RWPE1 (cell line): ENCODE measurements at regions of chr6 and their contacts with region 1.

Region 1: DNA sequence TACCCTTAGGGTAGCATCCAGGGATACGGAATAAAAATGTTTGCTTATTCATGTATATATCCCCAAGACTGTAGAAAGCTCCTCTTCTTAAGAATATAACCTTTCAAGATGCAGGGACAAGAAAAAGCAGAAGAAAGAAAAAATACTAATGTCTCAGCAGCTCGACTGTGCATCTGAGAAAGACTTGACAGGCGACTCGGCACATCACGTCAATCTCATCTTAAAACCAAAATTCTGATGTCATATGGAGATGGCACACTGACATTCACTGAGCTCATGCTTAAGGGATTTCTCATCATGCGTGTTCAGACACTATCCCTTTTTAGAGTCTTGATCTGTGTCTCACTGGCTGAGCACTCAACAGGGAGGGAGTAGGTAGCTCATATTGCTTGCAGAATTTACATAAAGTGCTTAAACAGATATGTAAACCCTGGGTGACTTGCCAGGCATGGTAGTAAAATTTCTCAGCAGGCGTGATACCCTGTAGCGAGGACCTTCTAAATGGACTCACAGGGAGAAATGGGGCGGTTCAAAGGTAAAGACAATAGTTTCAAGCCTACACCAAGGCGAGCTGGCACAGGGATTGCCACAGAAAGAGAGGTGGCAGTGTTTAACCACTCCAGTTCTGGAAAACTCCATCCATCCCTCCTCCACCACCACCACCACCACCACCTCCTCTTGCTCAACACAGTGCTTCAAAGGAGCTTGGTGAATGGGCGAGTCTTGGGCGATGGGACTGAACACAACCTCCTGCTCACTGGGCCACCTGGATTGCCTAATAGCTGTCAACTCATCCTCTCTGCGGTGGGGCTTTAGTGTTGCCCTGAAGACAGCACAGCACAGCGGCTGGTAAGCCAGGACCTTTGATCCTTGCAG is 330.5 kb downstream of the TFAP2A start:
- DNase-seq: peak; percentile 49
- H3K27ac ChIP-seq: peak overlapping the region; percentile 41; the same call in 1 of the 2 replicates
- CTCF ChIP-seq: no peak

Region 2: DNA sequence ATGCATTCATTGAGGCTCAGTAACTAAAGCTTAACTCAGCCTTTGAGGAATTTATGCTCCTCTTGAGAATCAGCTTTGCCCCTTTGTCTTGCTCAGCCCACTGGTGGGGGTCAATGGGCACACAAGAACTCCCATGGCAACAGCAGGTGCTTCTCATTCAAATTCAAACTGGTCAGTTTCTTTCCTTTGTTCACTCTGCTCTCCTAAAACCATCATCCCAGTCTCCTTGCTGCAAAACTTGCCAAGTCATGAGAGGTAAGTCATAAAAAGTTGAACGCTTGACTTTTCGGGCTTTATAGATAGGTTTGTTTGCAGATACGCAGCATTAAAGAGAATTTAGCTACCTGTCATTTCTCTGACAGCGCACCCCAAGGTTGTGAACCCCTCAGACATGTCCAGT is 183.8 kb after region 1 on chr6:
- CTCF ChIA-PET with region 1: no interaction called
- POLR2A ChIA-PET with region 1: no interaction called
- DNase-seq: no peak
- H3K27ac ChIP-seq: no peak overlapping the region
- CTCF ChIP-seq: no peak

Region 3: DNA sequence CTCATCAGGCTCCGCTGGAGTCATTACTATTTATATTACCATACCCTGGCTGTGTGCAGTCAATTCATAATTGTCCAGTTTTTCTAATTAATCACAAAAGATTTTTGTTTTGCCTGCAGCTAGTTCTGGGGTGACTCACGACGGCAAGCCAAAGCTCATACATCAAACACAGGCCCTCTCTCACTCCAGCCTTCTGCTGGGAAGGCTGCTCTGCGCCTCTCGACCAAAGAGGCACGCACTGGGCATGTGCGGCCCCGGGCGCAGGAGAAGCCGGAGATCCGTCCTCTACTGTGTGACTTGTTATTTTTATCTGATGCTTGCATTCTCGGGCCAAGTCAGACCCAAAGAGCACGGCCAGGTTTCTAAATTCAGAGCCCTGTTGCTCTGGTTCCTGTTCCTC is 232.0 kb after region 1 on chr6:
- CTCF ChIA-PET with region 1: interaction called, 3 read pairs
- POLR2A ChIA-PET with region 1: interaction called, 13 read pairs
- DNase-seq: peak; percentile 73
- H3K27ac ChIP-seq: peak overlapping the region; percentile 69
- CTCF ChIP-seq: no peak

Region 4: DNA sequence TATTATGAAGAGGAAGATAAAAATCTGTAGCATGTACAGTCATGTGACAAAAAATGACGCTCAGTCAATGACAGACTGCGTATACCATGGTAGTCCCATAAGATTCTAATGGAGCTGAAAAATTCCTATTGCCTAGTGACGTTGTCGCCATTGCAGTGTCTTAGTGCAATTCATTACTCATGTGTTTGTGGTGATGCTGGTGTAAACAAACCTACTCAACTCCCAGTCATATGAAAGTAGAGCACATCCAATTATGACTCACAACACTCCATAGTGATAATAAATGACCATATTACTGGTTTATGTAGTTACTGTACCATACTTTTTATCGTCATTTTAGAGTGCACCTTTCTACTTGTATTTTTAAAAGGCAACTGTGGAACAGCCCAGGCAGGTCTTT is 285.5 kb after region 1 on chr6:
- CTCF ChIA-PET with region 1: no interaction called
- POLR2A ChIA-PET with region 1: interaction called, 10 read pairs
- DNase-seq: peak; percentile 57
- H3K27ac ChIP-seq: no peak overlapping the region
- CTCF ChIP-seq: no peak